K562 (cell line): ENCODE measurements at regions of chr2 and their contacts with region 1.

Region 1: DNA sequence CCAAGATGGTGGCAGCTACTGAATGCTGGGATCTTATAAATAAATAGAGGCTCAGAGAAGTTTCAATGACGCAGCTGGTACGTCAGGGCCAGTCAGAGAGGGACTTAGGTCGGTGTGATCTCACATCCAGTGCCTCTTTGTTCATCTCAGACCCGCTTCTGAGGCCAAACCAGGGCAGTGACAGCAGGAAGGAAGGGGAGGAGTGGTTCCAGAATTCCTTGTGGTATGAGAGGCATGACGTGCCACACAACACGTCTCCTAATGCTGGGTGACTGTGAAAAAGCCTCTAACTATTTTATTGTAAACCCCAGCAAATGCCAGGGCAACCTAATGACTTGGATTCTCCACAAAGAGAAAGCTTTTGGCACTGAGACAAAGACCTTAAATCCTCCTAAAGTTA is 423.3 kb downstream of the LPIN1 start:
- DNase-seq: no peak
- ATAC-seq: no peak
- H3K4me3 ChIP-seq: no peak overlapping the region
- H3K27ac ChIP-seq: peak overlapping the region; percentile 51; the same call in 1 of the 3 replicates
- H3K4me1 ChIP-seq: peaks cover 12 to 17% of the 10 kb centered on the region in 2 experiments; a peak in 4 of 5 replicates
- H3K27me3 ChIP-seq: no peaks in the 10 kb centered on the region
- CTCF ChIP-seq: no peak
- EP300 ChIP-seq: no peak
- POLR2A ChIP-seq: no peak
- RAD21 ChIP-seq: no peak

Region 2: DNA sequence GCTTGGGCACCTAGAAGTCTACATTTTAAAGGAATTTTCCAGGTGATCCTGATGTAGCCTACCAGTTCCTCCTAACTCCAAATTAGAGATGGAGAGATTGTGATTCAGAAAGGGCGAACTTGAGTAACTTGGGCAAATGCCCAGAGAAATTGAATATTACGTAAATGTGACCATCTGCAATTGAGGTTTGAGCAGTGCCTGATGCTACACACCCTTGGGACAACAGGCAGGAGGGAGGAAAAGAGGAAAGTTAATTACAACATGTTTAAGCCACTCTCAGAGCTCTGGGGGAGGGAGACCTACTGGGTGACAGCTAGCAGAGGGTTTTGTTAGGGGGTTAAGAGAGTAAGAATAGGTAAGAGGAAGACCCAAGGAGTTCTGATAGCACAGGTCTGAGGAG is 214.4 kb before region 1 on chr2:
- CTCF ChIA-PET with region 1: no interaction called
- POLR2A ChIA-PET with region 1: no interaction called
- in situ Hi-C with region 1: no loop called
- intact Hi-C with region 1: loop called (anchors 5 kb)
- DNase-seq: no peak
- ATAC-seq: no peak
- H3K4me3 ChIP-seq: no peak overlapping the region
- H3K27ac ChIP-seq: no peak overlapping the region
- H3K4me1 ChIP-seq: no peaks in the 10 kb centered on the region; a peak in 3 of 5 replicates
- H3K27me3 ChIP-seq: no peaks in the 10 kb centered on the region
- CTCF ChIP-seq: no peak
- EP300 ChIP-seq: no peak
- POLR2A ChIP-seq: no peak
- RAD21 ChIP-seq: no peak

Region 3: GRCh38 chr2:12057436-12058166 is 112.1 kb before region 1 on chr2:
- CTCF ChIA-PET with region 1: no interaction called
- POLR2A ChIA-PET with region 1: no interaction called
- in situ Hi-C with region 1: no loop called
- intact Hi-C with region 1: loop called (anchors 10 kb)
- DNase-seq: peak in 1 of 4 experiments; percentile 20
- ATAC-seq: no peak
- H3K4me3 ChIP-seq: no peak overlapping the region
- H3K27ac ChIP-seq: no peak overlapping the region
- H3K4me1 ChIP-seq: peaks cover 10 to 47% of the 10 kb centered on the region in 2 experiments
- H3K27me3 ChIP-seq: no peaks in the 10 kb centered on the region
- CTCF ChIP-seq: no peak
- EP300 ChIP-seq: no peak
- POLR2A ChIP-seq: no peak
- RAD21 ChIP-seq: no peak

Region 4: DNA sequence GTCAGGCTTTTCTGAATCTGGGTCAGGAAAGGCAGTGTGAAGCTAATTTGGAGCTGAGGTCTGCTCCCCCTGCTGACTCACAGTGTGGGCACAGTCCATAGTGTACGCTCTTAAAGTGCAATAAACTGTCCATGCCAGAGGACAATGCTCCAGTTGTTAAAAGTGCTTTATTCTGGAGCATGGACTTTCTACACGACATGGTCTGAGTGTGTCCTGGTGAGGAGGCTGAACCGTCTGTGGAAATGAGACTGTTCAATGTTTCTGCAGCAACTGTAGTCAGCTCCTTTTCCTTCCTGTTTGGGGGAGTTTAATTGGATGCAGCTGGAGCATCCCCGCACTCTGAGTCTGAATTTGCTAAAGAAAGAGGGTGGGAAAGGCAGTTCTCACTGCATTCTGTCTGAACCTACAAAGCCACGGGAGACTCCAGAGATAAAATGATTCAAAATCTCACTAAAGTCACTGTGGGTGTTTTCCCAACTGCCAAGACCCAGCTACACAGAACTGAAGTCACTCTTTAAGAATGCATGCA is 436.8 kb after region 1 on chr2:
- CTCF ChIA-PET with region 1: no interaction called
- POLR2A ChIA-PET with region 1: no interaction called
- in situ Hi-C with region 1: no loop called
- intact Hi-C with region 1: loop called (anchors 10 kb)
- DNase-seq: peak in 1 of 4 experiments; percentile 33
- ATAC-seq: peak; percentile 85
- H3K4me3 ChIP-seq: no peak overlapping the region
- H3K27ac ChIP-seq: no peak overlapping the region
- H3K4me1 ChIP-seq: peaks cover 5 to 17% of the 10 kb centered on the region in 2 experiments; a peak in 4 of 5 replicates
- H3K27me3 ChIP-seq: no peaks in the 10 kb centered on the region
- CTCF ChIP-seq: peak in 2 of 3 experiments; percentile 22 to 39; a peak in 2 of 6 replicates
- EP300 ChIP-seq: no peak
- POLR2A ChIP-seq: no peak
- RAD21 ChIP-seq: peak in 1 of 2 experiments; percentile 43; a peak in 2 of 4 replicates